Ascending aorta (tissue), 2 donors: ENCODE measurements at regions of chr16 and their contacts with region 1.

Region 1: DNA sequence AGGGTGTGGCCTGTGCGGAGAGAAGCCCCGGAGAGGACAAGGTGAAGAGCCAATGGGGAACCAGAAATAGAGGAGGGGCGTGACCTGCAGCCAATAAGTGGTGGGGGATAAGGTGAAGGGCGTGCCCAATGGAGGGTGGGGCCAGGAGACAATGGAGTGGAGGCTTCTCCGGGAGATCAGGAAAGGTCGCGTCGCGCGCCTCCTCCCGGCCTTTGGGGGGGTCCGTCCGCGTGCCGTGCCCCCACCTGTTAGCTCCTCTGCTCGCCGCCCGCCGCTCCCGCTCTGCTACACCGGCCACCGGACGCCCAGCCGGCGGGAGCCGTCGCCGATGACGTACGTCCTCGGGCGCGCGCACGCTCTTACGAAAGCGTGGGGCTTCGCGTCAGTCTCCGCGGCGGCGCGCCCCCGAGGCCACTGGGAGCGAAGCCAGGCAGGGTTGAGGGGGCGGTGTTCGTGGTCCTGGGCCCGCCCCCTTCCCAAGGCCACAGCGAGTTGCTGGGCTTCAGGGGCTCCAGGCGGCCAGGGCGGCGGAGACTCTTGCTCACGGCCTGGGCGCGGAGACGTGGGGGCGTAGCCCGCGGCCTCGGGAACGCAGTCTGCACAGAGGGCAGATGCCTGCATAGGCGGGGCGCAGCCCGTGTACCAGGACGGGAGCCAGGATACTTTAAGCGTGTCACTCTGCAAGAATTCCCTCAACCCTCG is at the start of gene MATCAP1:
- DNase-seq: peak; percentile 90 to 98
- H3K4me3 ChIP-seq: peak within 1 kb of the TSS; percentile 74 to 76
- H3K27ac ChIP-seq: peak within 1 kb of the TSS; percentile 92 to 96
- H3K4me1 ChIP-seq: peaks cover 15 to 21% of the 10 kb centered on the region in 2 donors
- H3K27me3 ChIP-seq: no peaks in the 10 kb centered on the region
- CTCF ChIP-seq: no peak
- total RNA-seq, gene MATCAP1: 18.9 TPM

Region 2: GRCh38 chr16:66954097-66954659 is 229.6 kb before region 1 on chr16:
- intact Hi-C with region 1: loop called (anchors 2 kb)
- DNase-seq: peak in 1 of 2 donors; percentile 87
- H3K4me3 ChIP-seq: no peak overlapping the region
- H3K27ac ChIP-seq: no peak overlapping the region
- H3K4me1 ChIP-seq: no peaks in the 10 kb centered on the region
- H3K27me3 ChIP-seq: no peaks in the 10 kb centered on the region
- CTCF ChIP-seq: peak; percentile 53 to 80 (median 72)

Region 3: GRCh38 chr16:66977341-66978113 is 206.3 kb before region 1 on chr16:
- intact Hi-C with region 1: loop called (anchors 1 kb)
- DNase-seq: peak; percentile 35 to 92
- H3K4me3 ChIP-seq: no peak overlapping the region
- H3K27ac ChIP-seq: no peak overlapping the region
- H3K4me1 ChIP-seq: peaks cover 0 to 7% of the 10 kb centered on the region in 2 donors
- H3K27me3 ChIP-seq: no peaks in the 10 kb centered on the region
- CTCF ChIP-seq: peak; percentile 95 to 99 (median 97)

Region 4: DNA sequence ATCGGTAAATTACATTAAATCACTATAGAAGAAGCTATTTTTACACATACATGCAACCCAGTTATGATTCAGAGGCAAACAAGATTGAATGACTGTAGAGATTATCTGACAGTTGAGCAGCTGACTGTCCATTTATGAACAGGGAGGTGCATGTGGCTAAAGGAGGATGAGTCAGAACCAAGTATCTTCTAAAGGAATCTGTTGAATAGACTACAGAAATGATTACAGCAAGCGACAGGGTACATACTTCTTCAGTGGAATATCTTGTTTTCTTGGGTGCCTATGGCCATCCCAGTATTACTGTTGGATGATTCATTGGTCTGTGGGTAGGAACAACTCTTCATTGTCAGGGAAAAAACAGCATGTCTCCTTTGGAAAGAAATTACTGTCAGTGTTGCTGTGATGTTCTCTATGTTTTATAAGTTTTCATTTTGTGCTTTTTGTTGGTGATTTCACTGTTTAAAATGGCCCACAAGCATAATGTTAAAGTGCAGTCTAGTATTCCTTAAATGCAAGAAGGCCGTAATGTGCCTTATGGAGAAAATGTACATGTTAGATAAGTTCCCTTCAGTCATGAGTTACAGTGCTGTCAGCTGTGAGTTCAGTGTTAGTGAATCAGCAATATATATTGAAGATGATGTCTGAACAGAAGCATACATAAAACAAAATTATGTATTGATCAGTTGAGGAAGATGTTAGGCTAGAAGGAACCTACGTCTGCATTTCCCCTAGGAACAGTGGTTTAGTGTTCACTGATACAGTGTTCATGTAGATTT is 127.9 kb before region 1 on chr16:
- intact Hi-C with region 1: no loop called
- DNase-seq: no peak
- H3K4me3 ChIP-seq: no peak overlapping the region
- H3K27ac ChIP-seq: no peak overlapping the region
- H3K4me1 ChIP-seq: no peaks in the 10 kb centered on the region
- H3K27me3 ChIP-seq: no peaks in the 10 kb centered on the region
- CTCF ChIP-seq: no peak

Region 5: DNA sequence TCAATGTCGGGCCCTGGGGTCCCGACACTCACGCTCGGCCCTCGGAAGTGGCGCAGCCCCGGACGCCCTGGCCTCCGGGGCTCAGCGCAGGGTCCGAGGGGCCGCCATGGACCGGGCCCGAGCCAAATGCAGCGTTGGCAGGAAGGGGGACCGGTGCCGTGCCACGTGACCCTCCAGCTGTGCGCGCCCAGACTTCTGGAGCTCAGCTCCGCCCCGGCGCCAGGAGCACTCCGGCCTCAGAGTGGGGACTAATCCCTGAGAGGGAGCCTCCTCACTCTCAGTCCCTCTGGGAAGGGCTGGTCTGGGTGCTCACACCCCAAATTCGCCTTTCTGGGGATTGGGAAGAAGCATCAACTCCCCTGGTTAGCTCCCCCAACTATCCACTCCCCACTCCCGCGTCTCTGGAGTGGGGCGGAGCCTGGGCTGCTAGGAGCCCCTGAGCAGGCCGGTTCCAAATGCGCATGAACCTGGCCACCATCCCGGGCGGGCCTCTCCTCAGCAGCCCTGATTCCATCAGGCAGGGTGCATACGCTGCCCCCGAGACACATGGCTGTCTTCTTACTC is 32.9 kb before region 1 on chr16 and contains the start of gene B3GNT9:
- intact Hi-C with region 1: loop called (anchors 5 kb)
- DNase-seq: peak in 1 of 2 donors; percentile 85
- H3K4me3 ChIP-seq: peak within 1 kb of the TSS; percentile 68 to 75
- H3K27ac ChIP-seq: peak within 1 kb of the TSS; percentile 88 to 89
- H3K4me1 ChIP-seq: peaks cover 6 to 19% of the 10 kb centered on the region in 2 donors
- H3K27me3 ChIP-seq: no peaks in the 10 kb centered on the region
- CTCF ChIP-seq: no peak
- total RNA-seq, gene B3GNT9: 40.7 TPM